MCF 10A (cell line): ENCODE measurements at regions of chr9 and their contacts with region 1.

Region 1: GRCh38 chr9:126704873-126705766 is 91.4 kb downstream of the LMX1B start:
- DNase-seq: peak; percentile 73
- H3K4me3 Mint-ChIP-seq: peak overlapping the region; percentile 60
- H3K27ac Mint-ChIP-seq: no peak overlapping the region
- H3K4me1 Mint-ChIP-seq: peaks cover 12% of the 10 kb centered on the region
- H3K27me3 Mint-ChIP-seq: no peaks in the 10 kb centered on the region
- CTCF ChIP-seq: peak; percentile 88

Region 2: DNA sequence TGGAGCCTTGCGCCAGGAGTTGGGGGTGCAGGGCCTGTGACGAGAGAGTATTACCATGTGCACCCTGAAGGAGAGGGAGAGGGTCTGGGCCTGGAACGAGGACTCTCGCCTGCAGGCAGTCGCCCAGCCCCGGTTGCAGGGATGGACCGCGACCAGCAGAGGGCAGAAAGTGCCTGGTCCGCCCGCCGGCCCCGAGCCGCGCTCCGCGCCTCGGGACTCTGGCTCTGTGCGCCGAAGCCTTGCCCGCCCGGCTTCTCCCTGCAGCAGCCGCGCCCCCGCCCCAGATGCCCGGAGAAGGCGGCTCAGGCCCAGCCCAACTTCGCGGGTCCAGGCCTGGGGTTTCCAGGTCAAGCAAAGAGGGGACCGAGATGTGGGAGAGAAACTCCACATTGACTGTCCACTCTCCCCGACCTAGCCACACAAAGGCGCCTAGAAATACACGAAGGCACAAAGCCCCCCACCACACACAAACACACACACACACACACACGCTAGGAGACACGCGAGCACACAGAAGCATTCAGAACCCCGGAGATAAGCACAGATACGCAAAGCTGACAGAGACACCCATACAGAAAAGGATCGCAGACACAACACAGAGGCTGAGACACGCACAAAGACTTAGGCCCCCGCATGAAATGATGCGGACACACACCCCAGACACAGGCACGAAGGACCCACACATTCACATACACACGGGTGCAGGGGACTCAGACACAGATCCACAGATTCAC is 93.4 kb before region 1 on chr9:
- CTCF ChIA-PET with region 1: interaction called, 8 read pairs
- POLR2A ChIA-PET with region 1: interaction called, 14 read pairs
- intact Hi-C with region 1: no loop called
- DNase-seq: peak; percentile 64
- H3K4me3 Mint-ChIP-seq: peak overlapping the region; percentile 2
- H3K27ac Mint-ChIP-seq: no peak overlapping the region
- H3K4me1 Mint-ChIP-seq: peaks cover 11% of the 10 kb centered on the region
- H3K27me3 Mint-ChIP-seq: peaks cover 14% of the 10 kb centered on the region
- CTCF ChIP-seq: peak; percentile 83

Region 3: DNA sequence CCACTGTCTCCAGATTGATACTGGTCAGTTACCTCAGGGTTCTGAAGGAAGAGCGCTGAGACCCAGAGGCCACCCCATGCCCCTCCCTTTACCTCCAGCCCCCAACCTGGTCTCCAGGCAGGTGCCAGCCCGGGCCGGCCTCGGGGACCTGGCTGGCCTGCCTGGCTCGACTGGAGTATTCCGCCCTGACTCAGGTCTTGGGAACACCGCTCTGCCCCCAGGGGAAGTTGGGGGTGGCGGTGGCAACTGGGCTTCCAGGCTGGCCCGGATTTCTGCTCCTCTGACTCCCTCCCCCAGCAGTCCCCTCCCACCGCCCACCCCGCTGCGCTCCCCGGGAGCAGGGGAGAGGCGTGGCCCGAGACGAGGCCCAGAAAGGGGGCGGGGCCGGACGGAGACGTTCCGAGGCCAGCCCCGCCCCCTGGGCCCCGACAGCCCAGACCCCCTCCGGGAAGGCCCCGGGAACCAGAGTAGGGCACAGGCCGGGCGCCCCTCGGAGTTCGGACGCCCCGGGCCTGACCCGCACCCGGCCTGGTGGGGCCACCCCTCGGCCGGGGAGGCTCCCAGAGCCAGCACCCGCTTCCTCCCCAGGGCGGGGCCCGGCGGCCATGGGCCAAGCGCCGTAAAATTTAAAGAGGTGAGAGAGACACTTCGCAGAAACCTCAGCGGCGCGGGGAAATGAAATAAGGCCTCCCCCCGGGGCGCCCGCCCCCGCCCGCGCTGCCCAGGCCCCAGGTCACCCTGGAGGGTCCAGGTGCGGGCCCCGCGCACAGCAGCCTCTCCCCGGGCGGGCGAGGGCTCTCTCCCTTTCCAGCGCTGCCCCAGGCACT is 17.3 kb after region 1 on chr9:
- CTCF ChIA-PET with region 1: interaction called, 41 read pairs
- POLR2A ChIA-PET with region 1: no interaction called
- intact Hi-C with region 1: no loop called
- DNase-seq: peak; percentile 83
- H3K4me3 Mint-ChIP-seq: peak overlapping the region; percentile 68
- H3K27ac Mint-ChIP-seq: peak overlapping the region; percentile 12
- H3K4me1 Mint-ChIP-seq: peaks cover 16% of the 10 kb centered on the region
- H3K27me3 Mint-ChIP-seq: peaks cover 11% of the 10 kb centered on the region
- CTCF ChIP-seq: no peak

Region 4: GRCh38 chr9:126752376-126752775 is 47.3 kb after region 1 on chr9:
- CTCF ChIA-PET with region 1: interaction called, 24 read pairs
- POLR2A ChIA-PET with region 1: interaction called, 6 read pairs
- intact Hi-C with region 1: no loop called
- DNase-seq: peak; percentile 4
- H3K4me3 Mint-ChIP-seq: no peak overlapping the region
- H3K27ac Mint-ChIP-seq: no peak overlapping the region
- H3K4me1 Mint-ChIP-seq: peaks cover 10% of the 10 kb centered on the region
- H3K27me3 Mint-ChIP-seq: peaks cover 43% of the 10 kb centered on the region
- CTCF ChIP-seq: no peak

Region 5: GRCh38 chr9:126773004-126773607 is 68.0 kb after region 1 on chr9:
- CTCF ChIA-PET with region 1: interaction called, 358 read pairs
- POLR2A ChIA-PET with region 1: interaction called, 85 read pairs
- intact Hi-C with region 1: no loop called
- DNase-seq: peak; percentile 35
- H3K4me3 Mint-ChIP-seq: no peak overlapping the region
- H3K27ac Mint-ChIP-seq: no peak overlapping the region
- H3K4me1 Mint-ChIP-seq: no peaks in the 10 kb centered on the region
- H3K27me3 Mint-ChIP-seq: peaks cover 17% of the 10 kb centered on the region
- CTCF ChIP-seq: peak; percentile 45

Region 6: GRCh38 chr9:126791406-126792151 is 86.5 kb after region 1 on chr9:
- CTCF ChIA-PET with region 1: interaction called, 358 read pairs
- POLR2A ChIA-PET with region 1: interaction called, 16 read pairs
- intact Hi-C with region 1: no loop called
- DNase-seq: peak; percentile 97
- H3K4me3 Mint-ChIP-seq: peak overlapping the region; percentile 63
- H3K27ac Mint-ChIP-seq: peak overlapping the region; percentile 99
- H3K4me1 Mint-ChIP-seq: peaks cover 58% of the 10 kb centered on the region
- H3K27me3 Mint-ChIP-seq: no peaks in the 10 kb centered on the region
- CTCF ChIP-seq: no peak